Endothelial cell of umbilical vein (primary cell): ENCODE measurements at regions of chr9 and their contacts with region 1.

Region 1: DNA sequence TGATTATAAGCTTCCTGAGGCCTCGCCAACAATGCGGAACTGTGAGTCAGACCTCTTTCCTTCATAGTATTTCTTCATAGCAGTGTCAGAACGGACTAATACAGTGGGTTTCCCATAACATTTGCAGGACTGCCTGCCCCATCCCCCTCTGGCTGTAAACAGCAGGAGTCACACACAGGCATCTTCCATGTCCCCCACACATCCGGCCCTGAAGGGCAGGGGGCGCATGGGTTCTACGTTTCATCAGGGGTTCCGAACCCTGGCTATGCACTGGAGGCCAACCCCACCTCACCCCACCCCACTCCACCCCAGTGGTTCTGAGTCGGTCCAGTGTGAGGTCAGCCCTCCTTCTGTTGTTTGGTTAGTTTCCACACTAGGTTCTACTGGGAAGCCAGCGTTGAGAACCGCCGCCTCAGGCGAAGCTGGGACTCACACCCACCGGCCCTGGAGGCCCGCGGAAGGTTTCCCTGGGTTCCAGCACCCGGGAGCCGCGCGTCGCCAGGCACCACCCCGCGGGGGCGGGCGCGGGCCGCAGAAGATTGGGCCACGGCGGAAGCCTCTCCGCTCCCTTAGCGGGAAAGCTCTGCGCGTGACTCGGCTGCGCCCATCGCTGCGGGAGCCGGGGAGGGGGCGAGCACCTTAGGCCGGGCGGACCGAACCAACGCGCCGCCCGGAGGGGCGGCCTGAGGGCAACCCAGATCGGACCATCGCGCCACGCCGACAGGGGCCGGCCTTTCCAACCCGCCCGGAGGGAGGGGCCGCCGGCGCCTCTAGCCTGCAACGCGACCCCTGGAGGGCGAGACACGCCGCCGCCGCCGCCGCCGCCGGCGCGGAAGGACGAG is at the start of gene RUSC2:
- DNase-seq: peak; percentile 88
- H3K4me3 ChIP-seq: peak within 1 kb of the TSS; percentile 62 to 91 (median 66)
- H3K27ac ChIP-seq: peak within 1 kb of the TSS; percentile 96
- H3K4me1 ChIP-seq: peaks cover 10% of the 10 kb centered on the region
- H3K27me3 ChIP-seq: no peaks in the 10 kb centered on the region
- CTCF ChIP-seq: peak; percentile 30 to 38
- POLR2A ChIP-seq: peak; percentile 84
- total RNA-seq, gene RUSC2: 46.2 and 52.1 TPM in 2 replicates

Region 2: DNA sequence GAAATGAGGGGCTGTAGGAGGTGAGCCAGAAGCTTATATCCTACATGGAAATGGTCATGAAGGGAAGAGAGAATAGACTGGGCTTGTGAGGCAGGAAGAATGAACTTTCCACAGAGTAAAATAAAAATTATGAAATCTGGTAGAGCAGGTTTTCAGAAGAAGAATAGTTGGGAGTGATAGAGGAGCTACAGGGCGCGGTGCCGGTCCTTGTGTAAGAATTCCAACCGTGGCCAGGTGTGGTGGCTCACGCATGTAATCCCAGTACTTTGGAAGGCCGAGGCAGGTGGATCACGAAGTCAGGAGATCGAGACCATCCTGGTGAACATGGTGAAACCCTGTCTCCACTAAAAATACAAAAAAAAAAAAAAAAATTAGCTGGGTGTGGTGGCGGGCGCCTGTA is 336.6 kb before region 1 on chr9:
- CTCF ChIA-PET with region 1: no interaction called
- POLR2A ChIA-PET with region 1: no interaction called
- dilution Hi-C with region 1: no loop called
- intact Hi-C with region 1: no loop called
- DNase-seq: no peak
- H3K4me3 ChIP-seq: no peak overlapping the region
- H3K27ac ChIP-seq: no peak overlapping the region
- H3K4me1 ChIP-seq: no peaks in the 10 kb centered on the region
- H3K27me3 ChIP-seq: peaks cover 0 to 2% of the 10 kb centered on the region in 2 experiments
- CTCF ChIP-seq: no peak
- POLR2A ChIP-seq: no peak

Region 3: DNA sequence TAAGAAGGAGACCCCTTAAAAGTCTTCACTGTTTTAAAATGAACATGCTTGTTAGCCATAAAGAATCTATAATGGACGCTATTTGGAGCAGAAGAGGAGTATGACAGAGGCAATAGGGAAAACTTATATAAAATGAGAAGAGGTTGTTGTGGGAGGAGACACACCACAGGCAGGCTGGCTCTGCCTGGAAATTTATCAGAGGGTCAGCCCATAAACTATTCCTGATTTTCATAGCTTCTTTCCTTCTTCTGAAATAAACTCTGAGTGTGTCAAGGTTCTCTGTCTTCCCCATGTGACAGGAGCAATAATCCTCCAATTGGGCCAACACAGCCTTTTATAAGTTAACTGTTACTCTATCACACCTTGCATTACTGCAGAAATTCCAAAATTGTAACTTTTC is 19.2 kb before region 1 on chr9:
- CTCF ChIA-PET with region 1: no interaction called
- POLR2A ChIA-PET with region 1: no interaction called
- dilution Hi-C with region 1: no loop called
- intact Hi-C with region 1: no loop called
- DNase-seq: no peak
- H3K4me3 ChIP-seq: no peak overlapping the region
- H3K27ac ChIP-seq: no peak overlapping the region
- H3K4me1 ChIP-seq: no peaks in the 10 kb centered on the region
- H3K27me3 ChIP-seq: no peaks in the 10 kb centered on the region
- CTCF ChIP-seq: no peak
- POLR2A ChIP-seq: no peak

Region 4: DNA sequence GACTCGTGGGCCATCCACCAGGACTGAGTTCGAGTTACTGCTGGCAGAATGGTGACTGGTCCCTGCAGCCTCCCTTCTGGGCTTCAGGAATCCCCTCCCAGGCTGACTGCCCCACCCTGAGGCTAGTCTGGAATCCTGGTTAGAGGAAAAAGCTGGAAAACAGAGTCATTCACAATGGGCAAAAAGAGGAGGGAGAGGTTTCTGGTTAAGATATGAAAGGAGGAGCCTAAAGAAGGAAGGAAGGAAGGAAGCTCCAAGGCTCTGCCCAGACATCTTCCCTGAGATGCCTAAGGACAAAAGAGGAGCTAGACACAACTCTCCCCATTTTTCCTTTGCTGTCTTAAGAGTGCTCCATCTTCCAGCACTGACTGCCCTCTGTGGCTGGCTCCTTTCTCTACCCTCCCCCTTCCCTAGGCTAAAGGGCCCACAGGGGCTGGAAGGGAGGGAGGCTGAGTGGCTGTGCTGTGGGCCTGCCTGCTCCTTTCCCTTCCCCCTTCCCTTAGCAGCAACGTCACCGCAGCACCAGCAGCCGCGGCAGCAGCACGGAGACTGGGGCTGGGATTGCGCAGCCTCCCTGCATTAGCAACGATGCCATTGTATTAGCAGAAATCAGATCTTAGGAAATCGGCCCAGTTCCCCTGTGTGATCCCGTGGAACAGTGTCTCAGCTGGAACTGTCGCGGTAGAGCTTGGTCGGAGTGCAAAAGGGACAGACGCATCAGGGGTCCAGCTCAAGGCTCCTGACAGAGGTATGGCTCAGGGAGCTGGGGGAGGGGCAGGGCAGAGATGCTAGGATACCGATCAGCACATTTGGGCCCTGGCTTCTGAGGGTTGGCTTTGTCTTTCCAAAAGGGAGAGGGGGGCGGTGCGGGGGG is 49.1 kb after region 1 on chr9:
- CTCF ChIA-PET with region 1: interaction called, 6 read pairs
- POLR2A ChIA-PET with region 1: no interaction called
- dilution Hi-C with region 1: no loop called
- intact Hi-C with region 1: loop called (anchors 1 kb)
- DNase-seq: peak; percentile 83
- H3K4me3 ChIP-seq: peak overlapping the region in 2 of 3 experiments; percentile 28 to 52
- H3K27ac ChIP-seq: peak overlapping the region; percentile 77
- H3K4me1 ChIP-seq: peaks cover 30% of the 10 kb centered on the region
- H3K27me3 ChIP-seq: no peaks in the 10 kb centered on the region
- CTCF ChIP-seq: no peak
- POLR2A ChIP-seq: peak; percentile 42